ENCODE measurements at regions of chr11 and their contacts with region 1.

Region 1: GRCh38 chr11:46743693-46744339 is 24.8 kb downstream of the F2 start:
- DNase-seq: no peak
- H3K4me3 ChIP-seq: no peak overlapping the region
- H3K4me1 ChIP-seq: no peaks in the 10 kb centered on the region
- H3K27me3 ChIP-seq: no peaks in the 10 kb centered on the region

Region 2: GRCh38 chr11:46800177-46800576 is 56.4 kb after region 1 on chr11:
- in situ Hi-C with region 1: loop called (anchors 10 kb)
- DNase-seq: no peak
- H3K4me3 ChIP-seq: no peak overlapping the region
- H3K4me1 ChIP-seq: no peaks in the 10 kb centered on the region
- H3K27me3 ChIP-seq: no peaks in the 10 kb centered on the region

Measured in HAP-1 (cell line).